Naive thymus-derived CD4-positive, alpha-beta T cell (primary cell): ENCODE measurements at regions of chr6 and their contacts with region 1.

Region 1: GRCh38 chr6:27388293-27389197 is at the start of gene ZNF391:
- DNase-seq: peak; percentile 46 to 77 (median 67)
- ATAC-seq: peak; percentile 90
- H3K4me3 ChIP-seq: peak within 1 kb of the TSS; percentile 92
- H3K4me3 Mint-ChIP-seq: peak within 1 kb of the TSS; percentile 95 to 99 (median 98)
- H3K27ac ChIP-seq: peak within 1 kb of the TSS; percentile 78
- H3K27ac Mint-ChIP-seq: peak within 1 kb of the TSS; percentile 85 to 96 (median 93)
- H3K4me1 ChIP-seq: peaks cover 4 to 9% of the 10 kb centered on the region in 2 donors
- H3K4me1 Mint-ChIP-seq: peaks cover 9 to 31% (median 18%) of the 10 kb centered on the region in 7 donors
- H3K27me3 ChIP-seq: no peaks in the 10 kb centered on the region
- H3K27me3 Mint-ChIP-seq: peaks cover 0 to 9% (median 2%) of the 10 kb centered on the region in 5 donors
- total RNA-seq, gene ZNF391: 0.19 to 5.7 (median 3.3) TPM

Region 2: GRCh38 chr6:27312146-27312949 is 76.2 kb before region 1 on chr6 and contains the start of gene POM121L2:
- CTCF ChIA-PET with region 1: interaction called, 3 read pairs
- POLR2A ChIA-PET with region 1: no interaction called
- intact Hi-C with region 1: loop called in 1 of 2 experiments (anchors 1 kb)
- DNase-seq: peak in 8 of 9 donors; percentile 26 to 61 (median 56)
- ATAC-seq: peak; percentile 66
- H3K4me3 ChIP-seq: peak within 1 kb of the TSS; percentile 80
- H3K4me3 Mint-ChIP-seq: peak within 1 kb of the TSS; percentile 76 to 86 (median 83)
- H3K27ac ChIP-seq: no peak within 1 kb of the TSS
- H3K27ac Mint-ChIP-seq: peak within 1 kb of the TSS in 2 of 9 donors; percentile 15 to 25
- H3K4me1 ChIP-seq: peaks cover 0 to 6% of the 10 kb centered on the region in 2 donors
- H3K4me1 Mint-ChIP-seq: peaks cover 0 to 13% (median 4%) of the 10 kb centered on the region in 7 donors
- H3K27me3 ChIP-seq: peaks cover 4 to 14% of the 10 kb centered on the region in 2 donors
- H3K27me3 Mint-ChIP-seq: peaks cover 63 to 81% (median 73%) of the 10 kb centered on the region in 5 donors
- total RNA-seq, gene POM121L2: not detected

Region 3: DNA sequence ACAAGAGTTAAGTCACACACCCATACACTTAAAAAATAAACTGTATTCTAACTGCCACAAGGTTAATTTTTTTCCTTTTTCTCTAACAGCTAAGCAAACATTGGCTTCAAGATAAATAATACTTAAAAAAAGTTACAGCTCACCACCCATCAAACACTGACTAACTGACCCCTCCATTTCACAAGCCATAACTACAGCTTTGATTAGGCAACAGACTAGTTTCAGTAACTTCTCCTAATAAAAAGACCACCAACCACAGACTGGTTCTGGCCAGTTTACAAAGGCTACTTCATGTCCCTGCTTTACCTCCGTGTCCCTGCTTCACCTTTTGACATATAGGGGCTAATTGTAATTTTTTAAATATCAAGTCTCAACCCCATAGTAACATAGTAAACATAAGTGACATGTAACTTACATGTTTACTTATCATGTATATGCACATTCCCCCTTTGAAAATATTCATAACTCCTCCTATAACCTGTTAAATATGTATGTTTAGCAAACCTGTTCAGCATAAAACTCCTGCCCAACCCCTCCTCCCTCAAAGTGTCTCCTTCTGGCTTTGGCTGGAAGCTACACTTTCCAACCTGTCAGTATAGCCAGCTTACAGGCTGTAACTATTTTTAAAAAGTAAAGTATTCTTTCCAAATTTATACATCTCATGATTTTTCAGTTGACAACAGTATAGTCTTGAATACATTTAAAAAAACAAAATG is 61.4 kb before region 1 on chr6:
- CTCF ChIA-PET with region 1: no interaction called
- POLR2A ChIA-PET with region 1: no interaction called
- intact Hi-C with region 1: no loop called
- DNase-seq: no peak
- ATAC-seq: no peak
- H3K4me3 ChIP-seq: no peak overlapping the region
- H3K4me3 Mint-ChIP-seq: no peak overlapping the region
- H3K27ac ChIP-seq: no peak overlapping the region
- H3K27ac Mint-ChIP-seq: no peak overlapping the region
- H3K4me1 ChIP-seq: no peaks in the 10 kb centered on the region
- H3K4me1 Mint-ChIP-seq: peaks cover 0 to 4% (median under 1%) of the 10 kb centered on the region in 7 donors
- H3K27me3 ChIP-seq: peaks cover 2 to 3% of the 10 kb centered on the region in 2 donors
- H3K27me3 Mint-ChIP-seq: peaks cover 22 to 66% (median 50%) of the 10 kb centered on the region in 5 donors

Region 4: DNA sequence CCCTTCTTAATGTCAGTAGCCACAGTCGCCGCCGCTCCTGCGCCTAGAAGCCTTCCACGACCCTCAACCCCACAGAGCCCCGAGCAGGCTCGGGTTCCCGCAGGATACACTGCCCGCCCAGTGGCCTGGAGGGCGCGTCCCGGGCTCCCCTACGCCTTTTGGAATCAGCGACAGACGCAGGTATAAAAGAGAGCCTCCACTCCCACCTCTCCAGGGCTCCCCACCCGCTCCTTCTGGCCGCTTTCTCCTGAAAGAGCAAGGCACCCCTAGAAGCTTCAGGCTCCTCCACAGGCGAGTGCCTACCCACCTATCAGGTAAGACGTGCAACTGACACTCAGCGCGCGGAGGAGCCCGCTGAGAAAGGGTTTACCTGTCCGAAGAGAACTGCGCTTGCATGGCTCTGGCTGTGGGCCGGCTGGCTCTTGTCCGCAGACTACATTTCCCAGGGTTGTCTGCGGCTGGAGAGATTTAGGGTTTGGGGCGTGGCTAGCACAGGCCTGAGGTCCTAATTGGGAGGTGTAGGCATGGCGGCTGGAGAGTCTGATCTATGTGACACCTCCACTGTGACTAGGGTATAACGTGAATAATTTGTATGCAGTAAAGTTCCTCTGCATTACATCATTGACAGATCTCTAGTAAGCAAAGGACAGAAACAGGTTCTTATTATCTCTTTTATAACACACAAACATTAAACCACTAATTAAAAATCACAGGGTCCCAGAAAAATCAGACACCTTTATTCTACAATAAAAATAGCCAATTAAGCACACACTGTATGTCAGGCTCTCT is 13.5 kb before region 1 on chr6:
- CTCF ChIA-PET with region 1: no interaction called
- POLR2A ChIA-PET with region 1: interaction called, 5 read pairs
- intact Hi-C with region 1: loop called in 1 of 2 experiments (anchors 1 kb)
- DNase-seq: peak; percentile 31 to 68 (median 62)
- ATAC-seq: peak; percentile 98
- H3K4me3 ChIP-seq: peak overlapping the region; percentile 81
- H3K4me3 Mint-ChIP-seq: peak overlapping the region; percentile 68 to 94 (median 92)
- H3K27ac ChIP-seq: peak overlapping the region; percentile 68
- H3K27ac Mint-ChIP-seq: peak overlapping the region in 8 of 9 donors; percentile 81 to 93 (median 87)
- H3K4me1 ChIP-seq: peaks cover 13 to 17% of the 10 kb centered on the region in 2 donors
- H3K4me1 Mint-ChIP-seq: peaks cover 16 to 35% (median 28%) of the 10 kb centered on the region in 7 donors
- H3K27me3 ChIP-seq: no peaks in the 10 kb centered on the region
- H3K27me3 Mint-ChIP-seq: peaks cover 0 to 6% (median under 1%) of the 10 kb centered on the region in 5 donors

Region 5: GRCh38 chr6:27518881-27519795 is 130.6 kb after region 1 on chr6:
- CTCF ChIA-PET with region 1: no interaction called
- POLR2A ChIA-PET with region 1: no interaction called
- intact Hi-C with region 1: loop called in 1 of 2 experiments (anchors 2 kb)
- DNase-seq: peak; percentile 34 to 79 (median 68)
- ATAC-seq: peak; percentile 81
- H3K4me3 ChIP-seq: peak overlapping the region; percentile 96
- H3K4me3 Mint-ChIP-seq: peak overlapping the region; percentile 84 to 97 (median 91)
- H3K27ac ChIP-seq: peak overlapping the region; percentile 67
- H3K27ac Mint-ChIP-seq: peak overlapping the region; percentile 68 to 94 (median 84)
- H3K4me1 ChIP-seq: peaks cover 7 to 11% of the 10 kb centered on the region in 2 donors
- H3K4me1 Mint-ChIP-seq: peaks cover 0 to 31% (median 18%) of the 10 kb centered on the region in 7 donors
- H3K27me3 ChIP-seq: peaks cover 0 to 3% of the 10 kb centered on the region in 2 donors
- H3K27me3 Mint-ChIP-seq: peaks cover 0 to 40% (median 22%) of the 10 kb centered on the region in 5 donors